Tibial artery (tissue), 4 donors: ENCODE measurements at regions of chr19 and their contacts with region 1.

Region 1: DNA sequence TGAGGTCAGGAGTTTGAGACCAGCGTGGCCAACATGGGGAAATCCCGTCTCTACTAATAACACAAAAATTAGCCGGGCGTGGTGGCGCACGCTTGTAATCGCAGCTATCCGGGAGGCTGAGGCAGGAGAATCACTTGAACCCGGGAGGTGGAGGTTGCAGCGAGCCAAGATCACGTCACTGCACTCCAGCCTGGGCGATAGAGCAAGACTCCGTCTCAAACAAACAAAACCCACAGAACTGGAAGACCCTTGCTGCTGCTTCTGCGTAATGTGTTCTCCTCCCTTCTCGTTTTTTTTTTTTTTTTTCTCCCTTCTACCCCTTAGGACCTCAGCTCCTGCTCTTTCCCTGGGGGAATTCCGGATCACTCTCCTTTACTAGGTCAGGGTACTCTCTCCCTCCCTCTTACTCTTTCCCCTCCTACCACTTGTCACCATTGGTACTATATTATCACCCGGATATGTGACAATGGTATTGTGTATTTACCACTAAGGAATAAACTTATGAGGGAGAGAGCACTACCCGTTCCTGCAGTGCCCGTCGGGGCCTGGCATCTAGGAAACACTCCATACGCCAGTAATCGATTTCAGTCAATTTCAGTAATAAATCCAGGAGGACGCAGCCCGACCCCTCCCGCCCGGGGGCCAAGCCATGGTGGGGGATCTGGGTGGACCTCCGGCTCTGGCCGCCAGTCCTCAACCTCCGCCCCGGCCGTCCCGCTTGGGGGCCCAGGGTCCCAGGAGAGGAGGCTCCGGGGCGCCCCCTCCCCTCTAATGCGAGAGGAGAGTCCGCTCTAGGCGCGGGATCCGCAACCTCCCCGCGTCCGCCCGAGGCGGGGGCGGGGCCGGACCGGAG is 429 bp upstream of the GARRE1 start:
- DNase-seq: peak; percentile 82 to 92
- H3K4me3 ChIP-seq: peak overlapping the region; percentile 89 to 90
- H3K27ac ChIP-seq: peak overlapping the region; percentile 90 to 96
- H3K4me1 ChIP-seq: peaks cover 0 to 32% (median 12%) of the 10 kb centered on the region in 4 donors
- H3K27me3 ChIP-seq: no peaks in the 10 kb centered on the region
- CTCF ChIP-seq: no peak

Region 2: DNA sequence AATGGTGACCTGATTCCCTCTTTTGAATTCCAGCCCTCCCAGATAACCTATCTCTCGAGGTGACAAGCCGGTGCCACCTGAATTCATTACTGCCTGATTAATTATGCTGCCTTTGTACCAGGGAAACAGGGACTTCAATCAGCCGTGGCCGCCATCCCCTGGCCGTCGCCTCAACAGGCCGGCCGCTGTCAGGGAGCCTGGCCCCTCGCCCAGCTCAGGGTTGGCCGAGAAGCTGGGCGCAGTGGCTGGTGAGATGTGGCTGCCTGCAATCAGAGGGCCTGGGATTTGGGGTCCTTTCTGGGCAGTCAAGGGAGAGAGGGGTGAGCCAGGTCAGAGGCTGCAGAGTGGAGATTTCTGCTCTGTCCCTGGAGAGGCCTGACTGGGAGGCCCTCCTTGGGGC is 366.0 kb before region 1 on chr19:
- intact Hi-C with region 1: no loop called
- DNase-seq: no peak
- H3K4me3 ChIP-seq: no peak overlapping the region
- H3K27ac ChIP-seq: no peak overlapping the region
- H3K4me1 ChIP-seq: peaks cover 0 to 8% (median 4%) of the 10 kb centered on the region in 4 donors
- H3K27me3 ChIP-seq: peaks cover 2 to 28% of the 10 kb centered on the region in 2 donors
- CTCF ChIP-seq: no peak

Region 3: DNA sequence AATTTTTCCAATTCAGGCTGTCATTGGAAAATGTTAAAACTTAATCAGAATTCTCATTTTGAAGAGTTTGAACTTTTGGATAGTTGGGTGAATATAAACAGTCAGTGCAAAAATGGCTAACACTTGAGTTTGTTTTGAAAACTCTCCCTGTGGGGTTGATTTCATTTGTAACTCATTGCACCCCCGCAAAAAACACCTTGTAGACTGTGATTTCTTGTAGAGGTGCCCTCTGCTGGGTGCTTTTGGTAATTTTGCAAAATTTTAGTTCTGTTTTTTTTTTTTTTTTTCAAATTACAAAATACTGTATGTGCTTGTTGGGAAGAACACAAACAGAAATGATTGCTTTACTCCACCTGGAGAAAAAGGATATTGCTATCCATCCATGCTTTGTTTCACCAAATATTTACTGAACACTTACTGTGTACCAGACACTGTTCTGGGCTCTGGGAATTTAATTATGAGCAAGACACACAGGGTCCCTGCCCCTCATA is 82.9 kb after region 1 on chr19:
- intact Hi-C with region 1: loop called (anchors 10 kb)
- DNase-seq: no peak
- H3K4me3 ChIP-seq: no peak overlapping the region
- H3K27ac ChIP-seq: peak overlapping the region in 1 of 2 donors; percentile 2
- H3K4me1 ChIP-seq: peaks cover 0 to 7% (median 4%) of the 10 kb centered on the region in 4 donors
- H3K27me3 ChIP-seq: no peaks in the 10 kb centered on the region
- CTCF ChIP-seq: peak; percentile 51 to 62